ENCODE measurements at regions of chr2 and their contacts with region 1.

Region 1: DNA sequence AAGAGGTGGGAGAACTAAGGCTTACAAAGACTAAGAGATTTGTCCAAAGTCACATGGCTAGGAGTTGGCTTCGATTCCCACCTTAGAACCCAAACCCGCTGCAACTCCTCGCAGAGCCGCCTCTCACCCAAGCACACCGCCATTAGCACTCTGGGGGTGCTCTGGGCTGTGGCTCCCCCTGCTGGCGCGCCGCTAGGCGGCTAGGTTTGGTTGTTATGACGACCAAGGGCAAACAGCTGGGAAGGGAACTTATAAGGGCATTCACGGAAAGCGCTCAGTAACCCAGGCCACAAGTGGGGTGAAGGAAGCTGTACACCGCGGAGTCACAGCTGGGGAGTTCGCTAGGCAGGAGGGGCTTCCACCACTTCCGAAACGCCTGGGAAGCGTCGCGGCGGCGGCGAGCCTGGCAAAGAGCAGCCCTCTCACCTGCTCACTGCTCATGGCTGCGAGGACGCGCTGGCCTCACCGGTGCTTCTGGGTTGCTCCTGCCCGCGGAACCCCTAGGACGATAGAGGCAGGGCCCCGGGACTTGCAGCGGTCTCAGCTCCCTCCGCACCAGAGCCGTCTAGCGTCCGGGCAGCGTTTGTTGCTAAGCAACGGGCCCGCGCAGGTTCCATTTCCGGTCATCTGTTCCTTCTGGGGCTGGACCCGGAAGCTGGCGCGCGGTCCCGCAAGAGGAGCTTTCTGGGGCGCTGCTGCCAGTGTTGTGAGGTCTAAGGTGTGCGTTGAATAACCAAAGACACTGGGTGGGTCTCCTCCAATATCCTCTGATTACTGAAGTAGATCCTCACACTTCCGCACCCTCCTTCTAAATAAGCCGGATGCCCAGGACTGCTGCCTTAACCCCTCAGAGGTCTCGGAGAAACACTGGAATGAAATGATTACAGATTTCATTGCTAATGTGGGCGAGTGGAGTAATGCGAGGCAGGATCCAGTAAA is at the start of gene DNAH7:
- DNase-seq: peak; percentile 83
- ATAC-seq: peak; percentile 94
- H3K4me3 Mint-ChIP-seq: peak within 1 kb of the TSS; percentile 93
- H3K27ac Mint-ChIP-seq: peak within 1 kb of the TSS; percentile 91
- H3K4me1 Mint-ChIP-seq: peaks cover 12% of the 10 kb centered on the region
- H3K27me3 Mint-ChIP-seq: peaks cover under 1% of the 10 kb centered on the region
- CTCF ChIP-seq: peak; percentile 47
- total RNA-seq, gene DNAH7: 0.17 and 0.29 TPM in 2 replicates

Region 2: GRCh38 chr2:194166818-194167217 is 1901.7 kb before region 1 on chr2:
- CTCF ChIA-PET with region 1: interaction called, 4 read pairs
- POLR2A ChIA-PET with region 1: no interaction called
- intact Hi-C with region 1: loop called (anchors 1 kb)
- DNase-seq: no peak
- ATAC-seq: no peak
- H3K4me3 Mint-ChIP-seq: no peak overlapping the region
- H3K27ac Mint-ChIP-seq: no peak overlapping the region
- H3K4me1 Mint-ChIP-seq: no peaks in the 10 kb centered on the region
- H3K27me3 Mint-ChIP-seq: no peaks in the 10 kb centered on the region
- CTCF ChIP-seq: no peak

Region 3: GRCh38 chr2:195404651-195405050 is 663.9 kb before region 1 on chr2:
- CTCF ChIA-PET with region 1: interaction called, 4 read pairs
- POLR2A ChIA-PET with region 1: no interaction called
- intact Hi-C with region 1: loop called (anchors 1 kb)
- DNase-seq: no peak
- ATAC-seq: no peak
- H3K4me3 Mint-ChIP-seq: no peak overlapping the region
- H3K27ac Mint-ChIP-seq: no peak overlapping the region
- H3K4me1 Mint-ChIP-seq: no peaks in the 10 kb centered on the region
- H3K27me3 Mint-ChIP-seq: no peaks in the 10 kb centered on the region
- CTCF ChIP-seq: no peak

Region 4: DNA sequence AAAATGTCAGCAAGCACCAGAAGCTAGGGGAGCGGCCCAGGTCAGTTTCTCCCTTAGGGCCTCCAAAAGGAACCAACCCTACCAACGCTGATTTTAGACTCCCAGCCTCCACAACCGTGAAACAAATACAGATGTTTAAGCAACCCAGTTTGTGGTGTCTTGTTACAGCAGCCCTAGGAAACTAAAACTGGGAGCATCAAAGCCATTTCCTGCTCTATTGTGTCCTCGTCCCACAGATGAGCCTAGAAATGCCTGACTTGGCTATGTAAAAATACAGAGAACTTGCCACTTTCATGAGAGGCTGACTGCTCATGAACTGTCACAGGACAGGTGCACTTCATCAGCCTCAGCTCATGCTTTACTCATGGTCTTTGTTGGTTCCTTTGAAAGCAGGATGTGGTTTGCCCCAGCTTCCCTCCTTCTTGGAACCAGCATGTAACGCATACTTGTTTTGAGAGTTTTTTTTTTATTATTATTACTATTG is 509.1 kb before region 1 on chr2:
- CTCF ChIA-PET with region 1: interaction called, 3 read pairs
- POLR2A ChIA-PET with region 1: no interaction called
- intact Hi-C with region 1: loop called (anchors 5 kb)
- DNase-seq: no peak
- ATAC-seq: peak; percentile 70
- H3K4me3 Mint-ChIP-seq: peak overlapping the region; percentile 32
- H3K27ac Mint-ChIP-seq: peak overlapping the region; percentile 98
- H3K4me1 Mint-ChIP-seq: peaks cover 62% of the 10 kb centered on the region
- H3K27me3 Mint-ChIP-seq: no peaks in the 10 kb centered on the region
- CTCF ChIP-seq: no peak

Region 5: GRCh38 chr2:196259507-196260481 is 191.3 kb after region 1 on chr2:
- CTCF ChIA-PET with region 1: no interaction called
- POLR2A ChIA-PET with region 1: no interaction called
- intact Hi-C with region 1: no loop called
- DNase-seq: no peak
- ATAC-seq: peak; percentile 41
- H3K4me3 Mint-ChIP-seq: peak overlapping the region; percentile 67
- H3K27ac Mint-ChIP-seq: peak overlapping the region; percentile 87
- H3K4me1 Mint-ChIP-seq: peaks cover 60% of the 10 kb centered on the region
- H3K27me3 Mint-ChIP-seq: no peaks in the 10 kb centered on the region
- CTCF ChIP-seq: no peak

Region 6: DNA sequence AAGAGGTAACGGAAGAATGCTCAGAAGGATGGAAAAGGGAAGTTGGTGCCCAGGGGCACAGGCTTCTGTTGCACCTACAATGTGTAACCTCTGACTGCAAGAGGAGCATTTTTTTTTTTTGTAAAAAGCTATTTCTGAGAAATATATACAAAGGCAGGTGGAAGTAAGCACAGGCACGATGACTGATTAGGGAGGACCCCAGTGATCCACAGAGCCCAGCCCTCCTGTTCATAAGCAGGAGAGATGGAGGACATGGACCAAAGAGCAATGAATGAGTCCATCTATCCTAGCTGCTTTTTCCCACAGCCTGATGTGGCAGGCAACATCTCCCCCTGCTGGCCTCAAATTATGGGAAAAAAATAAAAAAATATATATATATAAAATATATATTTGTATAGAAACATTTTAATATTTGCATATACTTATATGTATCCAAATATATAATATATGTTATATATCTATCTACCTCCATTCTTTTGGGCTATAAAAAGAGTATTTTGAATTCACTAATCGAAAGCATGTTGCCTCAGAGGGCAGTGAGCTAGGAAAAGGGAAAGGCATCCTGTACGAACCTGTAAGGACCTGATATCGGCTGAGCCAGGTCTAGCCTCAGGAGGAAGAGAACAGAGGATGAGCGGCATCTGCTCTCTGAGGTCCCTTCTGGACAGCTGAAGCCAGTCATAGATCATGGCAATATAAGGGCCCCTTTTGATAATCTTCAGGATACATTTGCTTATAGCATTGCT is 268.8 kb after region 1 on chr2:
- CTCF ChIA-PET with region 1: interaction called, 20 read pairs
- POLR2A ChIA-PET with region 1: no interaction called
- intact Hi-C with region 1: loop called (anchors 1 kb)
- DNase-seq: no peak
- ATAC-seq: peak; percentile 53
- H3K4me3 Mint-ChIP-seq: no peak overlapping the region
- H3K27ac Mint-ChIP-seq: peak overlapping the region; percentile 5
- H3K4me1 Mint-ChIP-seq: peaks cover 20% of the 10 kb centered on the region
- H3K27me3 Mint-ChIP-seq: no peaks in the 10 kb centered on the region
- CTCF ChIP-seq: no peak

Region 7: GRCh38 chr2:196926562-196927375 is 858.2 kb after region 1 on chr2 and contains the start of gene PGAP1:
- CTCF ChIA-PET with region 1: no interaction called
- POLR2A ChIA-PET with region 1: no interaction called
- intact Hi-C with region 1: loop called (anchors 5 kb)
- DNase-seq: peak; percentile 82
- ATAC-seq: peak; percentile 91
- H3K4me3 Mint-ChIP-seq: peak within 1 kb of the TSS; percentile 90
- H3K27ac Mint-ChIP-seq: peak within 1 kb of the TSS; percentile 86
- H3K4me1 Mint-ChIP-seq: peaks cover 21% of the 10 kb centered on the region
- H3K27me3 Mint-ChIP-seq: peaks cover 13% of the 10 kb centered on the region
- CTCF ChIP-seq: no peak
- total RNA-seq, gene PGAP1: 1.9 and 2.9 TPM in 2 replicates